OCI-LY7 (cell line): ENCODE measurements at regions of chr19 and their contacts with region 1.

Region 1: GRCh38 chr19:16446724-16447368 is 24.9 kb downstream of the EPS15L1 start:
- DNase-seq: peak; percentile 81
- H3K4me3 ChIP-seq: peak overlapping the region; percentile 48
- H3K27ac ChIP-seq: peak overlapping the region; percentile 96
- H3K4me1 ChIP-seq: peaks cover 95% of the 10 kb centered on the region
- CTCF ChIP-seq: no peak

Region 2: GRCh38 chr19:16076154-16076957 is 370.5 kb before region 1 on chr19 and contains the start of gene TPM4:
- CTCF ChIA-PET with region 1: no interaction called
- POLR2A ChIA-PET with region 1: no interaction called
- intact Hi-C with region 1: loop called (anchors 10 kb)
- DNase-seq: peak; percentile 67
- H3K4me3 ChIP-seq: peak within 1 kb of the TSS; percentile 80
- H3K27ac ChIP-seq: peak within 1 kb of the TSS; percentile 96
- H3K4me1 ChIP-seq: peaks cover 56% of the 10 kb centered on the region
- CTCF ChIP-seq: no peak
- total RNA-seq, gene TPM4: 111 and 134 TPM in 2 replicates

Region 3: DNA sequence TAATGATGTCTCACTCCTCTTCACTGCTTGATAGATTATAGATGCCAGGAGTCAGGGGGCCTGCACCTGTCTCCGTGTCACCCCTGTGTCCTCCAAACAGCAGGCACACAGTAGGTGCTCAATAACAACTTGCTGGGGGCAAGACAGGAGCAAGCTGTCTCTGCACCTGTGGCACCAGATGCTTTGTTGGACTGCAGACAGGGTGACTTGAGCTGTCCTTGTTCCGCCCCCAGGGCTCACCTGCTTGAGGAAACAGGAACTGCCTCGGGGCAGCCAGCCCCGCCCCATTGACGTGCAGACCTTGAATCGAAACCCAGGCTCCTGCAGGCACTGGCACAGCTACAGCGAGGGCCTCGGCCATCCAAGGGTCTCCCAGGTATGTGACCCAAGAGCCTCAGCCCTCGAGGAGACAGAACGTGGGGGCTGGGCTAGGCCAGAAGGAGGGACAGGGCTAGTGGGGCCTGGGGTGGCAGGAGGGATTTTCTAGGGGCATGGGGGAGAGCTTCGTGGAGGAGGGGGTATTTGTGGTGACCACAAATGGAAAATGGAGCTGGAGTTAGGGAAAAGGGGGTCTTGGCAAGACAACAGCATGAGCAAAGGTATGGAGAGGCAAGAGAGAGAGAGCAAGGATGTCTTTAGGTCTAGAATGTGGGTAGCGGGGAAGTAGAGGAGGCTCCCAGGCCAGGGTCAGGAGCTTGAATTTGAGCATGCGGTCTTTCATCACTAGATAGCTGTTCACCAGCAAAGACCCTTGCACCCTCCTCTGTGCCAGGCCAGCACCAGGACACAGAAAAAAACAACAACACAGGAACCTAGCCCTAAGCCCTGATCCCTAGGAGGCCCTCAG is 303.2 kb before region 1 on chr19 and contains the start of gene HSH2D:
- CTCF ChIA-PET with region 1: no interaction called
- POLR2A ChIA-PET with region 1: no interaction called
- intact Hi-C with region 1: loop called (anchors 5 kb)
- DNase-seq: peak; percentile 97
- H3K4me3 ChIP-seq: peak within 1 kb of the TSS; percentile 76
- H3K27ac ChIP-seq: peak within 1 kb of the TSS; percentile 81
- H3K4me1 ChIP-seq: peaks cover 70% of the 10 kb centered on the region
- CTCF ChIP-seq: no peak
- total RNA-seq, gene HSH2D: 52.4 and 57.6 TPM in 2 replicates

Region 4: DNA sequence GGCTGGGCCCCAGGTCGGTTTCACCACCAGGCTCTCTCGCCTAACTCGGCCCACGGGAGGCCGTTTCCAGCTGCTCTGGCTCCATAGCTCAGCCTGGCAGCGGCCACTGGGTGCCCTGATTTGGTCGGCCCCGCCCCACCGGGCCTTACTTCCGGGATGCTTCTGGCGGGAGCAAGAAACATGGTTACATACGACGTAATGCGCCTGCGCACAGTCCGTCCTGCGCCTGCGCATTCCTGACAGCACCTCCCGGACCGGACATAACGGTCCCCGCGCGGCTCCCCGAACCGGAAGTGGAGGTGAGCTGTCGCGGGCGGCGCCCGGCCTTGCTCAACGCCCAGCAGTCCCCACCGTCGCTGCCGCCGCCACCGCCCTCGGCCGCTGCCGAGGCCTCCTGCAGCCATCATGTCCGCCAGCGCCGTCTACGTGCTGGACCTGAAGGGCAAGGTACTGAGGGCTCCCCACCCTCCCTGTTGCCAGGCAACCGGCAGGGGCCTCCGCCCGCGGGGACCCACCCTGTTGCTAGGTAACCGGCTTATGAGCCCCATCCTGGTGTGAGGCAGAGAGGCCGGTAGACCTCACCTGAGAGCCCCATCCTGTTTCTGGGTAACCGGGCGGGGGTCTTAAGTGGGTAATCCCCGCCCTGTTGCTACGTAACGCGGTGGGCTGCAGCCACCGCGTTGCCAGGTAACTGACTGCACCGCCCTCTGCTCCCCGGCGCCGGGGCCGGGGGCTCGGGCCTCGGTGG is 249.1 kb before region 1 on chr19 and contains the start of gene AP1M1:
- CTCF ChIA-PET with region 1: no interaction called
- POLR2A ChIA-PET with region 1: no interaction called
- intact Hi-C with region 1: no loop called
- DNase-seq: peak; percentile 98
- H3K4me3 ChIP-seq: peak within 1 kb of the TSS; percentile 89
- H3K27ac ChIP-seq: peak within 1 kb of the TSS; percentile 54
- H3K4me1 ChIP-seq: peaks cover 24% of the 10 kb centered on the region
- CTCF ChIP-seq: no peak
- total RNA-seq, gene AP1M1: 68.4 and 92.9 TPM in 2 replicates

Region 5: DNA sequence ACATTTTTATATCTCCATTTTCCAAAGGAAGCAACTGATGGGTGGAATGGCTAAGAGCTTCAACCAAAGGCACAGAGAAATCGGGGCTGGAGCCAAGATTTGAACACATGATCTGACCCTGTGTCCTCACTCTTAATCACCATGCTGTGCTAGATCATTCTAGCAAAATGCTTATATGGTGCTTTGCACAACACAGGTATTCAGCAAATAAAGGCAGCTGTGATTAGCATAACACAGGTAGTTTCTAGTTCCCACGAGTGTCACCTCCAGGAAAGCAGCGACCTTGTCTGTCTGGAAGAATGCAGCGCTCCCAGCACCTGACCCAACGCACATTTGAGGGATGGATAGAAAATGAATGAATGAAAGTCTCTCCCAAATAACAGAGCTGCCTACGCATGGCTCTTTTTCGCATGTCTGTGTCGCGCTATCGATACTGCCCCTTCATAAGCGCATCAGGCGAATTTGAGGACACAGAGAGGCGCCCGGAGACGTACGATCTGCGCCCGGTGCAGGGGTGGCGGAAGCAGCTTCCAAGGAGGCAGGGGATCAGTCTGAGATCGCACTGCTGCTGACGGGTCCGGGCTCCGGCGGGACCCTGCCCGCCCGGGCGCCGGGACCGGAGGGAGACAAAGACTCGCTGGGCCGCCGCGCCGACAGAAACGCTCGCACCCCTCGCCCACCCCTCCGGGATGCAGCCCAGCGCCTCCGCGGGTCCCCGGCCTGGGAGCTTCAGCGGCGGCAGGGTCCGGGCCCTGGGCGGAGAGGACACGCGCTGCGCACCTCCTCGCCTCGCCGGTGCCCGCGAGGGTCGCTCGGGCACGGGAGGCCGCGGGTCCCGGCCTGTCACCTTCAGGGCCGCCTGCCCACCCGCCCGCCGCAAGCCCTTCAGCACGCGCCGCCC is 24.3 kb after region 1 on chr19:
- CTCF ChIA-PET with region 1: no interaction called
- POLR2A ChIA-PET with region 1: interaction called, 3 read pairs
- intact Hi-C with region 1: loop called (anchors 1 kb)
- DNase-seq: peak; percentile 51
- H3K4me3 ChIP-seq: peak overlapping the region; percentile 98
- H3K27ac ChIP-seq: peak overlapping the region; percentile 30
- H3K4me1 ChIP-seq: peaks cover 47% of the 10 kb centered on the region
- CTCF ChIP-seq: no peak

Region 6: GRCh38 chr19:16495982-16496612 is 49.3 kb after region 1 on chr19 and contains the starts of genes C19orf44 and CALR3:
- CTCF ChIA-PET with region 1: no interaction called
- POLR2A ChIA-PET with region 1: interaction called, 4 read pairs
- intact Hi-C with region 1: loop called (anchors 1 kb)
- DNase-seq: peak; percentile 99
- H3K4me3 ChIP-seq: peak within 1 kb of the TSS; percentile 81
- H3K27ac ChIP-seq: no peak within 1 kb of the TSS
- H3K4me1 ChIP-seq: peaks cover 22% of the 10 kb centered on the region
- CTCF ChIP-seq: no peak
- total RNA-seq, gene C19orf44: 5.2 and 6.8 TPM in 2 replicates
- total RNA-seq, gene CALR3: not detected in 2 replicates

Region 7: DNA sequence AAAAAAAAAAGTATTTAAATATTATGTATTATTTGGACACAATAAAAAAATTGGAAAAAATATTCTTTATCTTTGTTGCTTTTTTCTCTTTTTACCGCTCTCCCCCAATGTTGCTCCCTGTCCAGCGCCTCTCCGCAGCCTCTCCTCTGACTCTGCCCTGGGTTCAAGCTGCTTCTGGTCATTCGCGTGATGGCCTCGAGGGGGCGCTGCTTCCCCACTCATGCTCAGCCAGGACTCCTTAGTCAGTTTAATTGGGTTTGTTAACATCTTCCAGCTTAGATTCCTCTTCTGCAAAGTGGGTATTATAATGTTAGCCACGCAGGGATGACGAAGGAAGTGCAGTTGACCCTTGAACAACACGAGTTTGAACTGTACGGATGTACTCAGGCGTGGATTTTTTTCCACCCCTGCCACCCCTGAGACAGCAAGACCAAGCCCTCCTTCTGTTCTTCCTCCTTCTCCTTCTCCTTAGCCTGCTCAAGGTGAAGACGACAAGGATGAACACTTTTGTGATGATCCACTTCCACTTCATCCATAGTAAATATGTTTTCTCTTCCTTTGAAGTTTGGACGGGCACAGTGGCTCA is 267.9 kb after region 1 on chr19:
- CTCF ChIA-PET with region 1: no interaction called
- POLR2A ChIA-PET with region 1: no interaction called
- intact Hi-C with region 1: no loop called
- DNase-seq: peak; percentile 66
- H3K4me3 ChIP-seq: no peak overlapping the region
- H3K27ac ChIP-seq: no peak overlapping the region
- H3K4me1 ChIP-seq: peaks cover 40% of the 10 kb centered on the region
- CTCF ChIP-seq: peak; percentile 99